Activated CD4-positive, alpha-beta T cell treated with anti-CD3 and anti-CD28 coated beads, Interleukin-2, amount 10 ng/mL, durations not matched to agents 24 days and 14 days (primary cell): ENCODE measurements at regions of chr1 and their contacts with region 1.

Region 1: GRCh38 chr1:89454845-89455521 is 69.6 kb upstream of the LRRC8B start:
- DNase-seq: peak; percentile 91
- H3K4me3 Mint-ChIP-seq: no peak overlapping the region
- H3K27ac Mint-ChIP-seq: no peak overlapping the region
- H3K4me1 Mint-ChIP-seq: peaks cover 23% of the 10 kb centered on the region
- H3K27me3 Mint-ChIP-seq: peaks cover 38% of the 10 kb centered on the region

Region 2: DNA sequence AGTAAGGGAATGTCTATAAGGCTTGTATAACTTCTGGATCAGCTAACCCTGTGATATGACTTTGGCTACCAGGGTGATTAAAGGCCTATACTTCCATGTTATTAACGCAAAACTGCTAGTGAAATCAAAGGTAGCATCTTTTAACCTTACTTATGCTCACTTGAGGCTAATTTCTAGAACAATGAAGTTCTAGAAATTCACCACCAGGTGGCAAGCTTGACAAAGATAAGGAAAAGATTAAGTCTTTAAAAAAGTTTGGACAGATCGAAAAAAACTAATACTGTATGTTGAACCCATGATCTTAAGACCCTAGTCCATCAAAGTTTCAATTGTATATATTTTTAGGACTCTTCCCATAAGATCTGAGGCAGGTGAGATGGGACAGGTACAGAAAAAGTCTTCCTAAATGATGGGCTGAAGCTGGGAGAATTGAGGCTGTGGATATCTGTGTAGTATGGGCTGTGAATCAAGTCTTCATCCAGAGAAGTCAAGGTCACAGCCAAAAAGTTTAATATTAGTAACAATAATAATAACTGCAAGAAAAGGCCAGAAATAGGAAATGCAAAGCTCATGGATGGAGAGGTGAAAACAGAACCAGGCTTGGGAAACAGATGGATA is 481.4 kb before region 1 on chr1:
- intact Hi-C with region 1: loop called (anchors 1 kb)
- DNase-seq: no peak
- H3K4me3 Mint-ChIP-seq: no peak overlapping the region
- H3K27ac Mint-ChIP-seq: peak overlapping the region; percentile 4
- H3K4me1 Mint-ChIP-seq: peaks cover 21% of the 10 kb centered on the region
- H3K27me3 Mint-ChIP-seq: no peaks in the 10 kb centered on the region

Region 3: DNA sequence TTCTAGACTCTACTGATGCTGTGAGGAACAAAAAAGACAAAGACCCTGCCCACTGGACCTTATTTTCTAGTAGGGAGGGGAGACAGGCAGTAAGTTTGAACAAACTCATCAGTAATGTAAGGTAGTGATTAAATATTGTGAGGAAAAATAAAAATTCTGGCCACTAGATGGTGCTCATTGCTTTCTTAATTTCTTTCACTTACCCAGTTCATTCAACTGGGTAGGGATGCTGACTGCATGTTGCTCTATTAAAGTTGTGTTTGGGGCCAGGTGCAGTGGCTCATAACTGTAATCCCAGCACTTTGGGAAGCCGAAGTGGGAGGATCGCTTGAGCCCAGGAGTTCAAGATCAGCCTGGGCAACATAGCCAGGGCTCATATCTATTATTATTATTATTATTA is 456.3 kb before region 1 on chr1:
- intact Hi-C with region 1: loop called (anchors 1 kb)
- DNase-seq: peak; percentile 85
- H3K4me3 Mint-ChIP-seq: no peak overlapping the region
- H3K27ac Mint-ChIP-seq: no peak overlapping the region
- H3K4me1 Mint-ChIP-seq: peaks cover 30% of the 10 kb centered on the region
- H3K27me3 Mint-ChIP-seq: no peaks in the 10 kb centered on the region

Region 4: DNA sequence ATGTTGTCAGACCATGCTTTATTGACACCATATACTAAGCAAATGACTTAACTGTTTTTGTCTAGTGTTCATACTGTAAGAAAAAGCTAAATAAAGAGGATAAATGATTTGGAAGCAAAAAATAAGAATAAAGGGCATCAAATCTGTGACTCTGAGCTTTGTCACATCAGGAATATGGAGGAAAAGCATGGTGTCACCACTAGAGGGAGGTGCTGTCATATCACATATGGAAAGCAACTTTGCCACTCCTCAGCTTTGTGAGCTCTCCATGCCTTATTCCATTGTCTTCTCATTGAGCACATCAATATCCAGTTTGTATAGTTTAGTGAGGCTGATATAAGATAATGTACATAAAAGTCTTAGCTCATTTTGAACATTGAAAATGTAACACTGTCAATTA is 369.2 kb before region 1 on chr1:
- intact Hi-C with region 1: loop called (anchors 1 kb)
- DNase-seq: peak; percentile 89
- H3K4me3 Mint-ChIP-seq: no peak overlapping the region
- H3K27ac Mint-ChIP-seq: no peak overlapping the region
- H3K4me1 Mint-ChIP-seq: peaks cover 12% of the 10 kb centered on the region
- H3K27me3 Mint-ChIP-seq: no peaks in the 10 kb centered on the region

Region 5: GRCh38 chr1:89198491-89199072 is 256.4 kb before region 1 on chr1 and contains the start of gene GBP4:
- intact Hi-C with region 1: loop called (anchors 1 kb)
- DNase-seq: peak; percentile 87
- H3K4me3 Mint-ChIP-seq: peak within 1 kb of the TSS; percentile 91
- H3K27ac Mint-ChIP-seq: peak within 1 kb of the TSS; percentile 96
- H3K4me1 Mint-ChIP-seq: peaks cover 67% of the 10 kb centered on the region
- H3K27me3 Mint-ChIP-seq: no peaks in the 10 kb centered on the region
- total RNA-seq, gene GBP4: 29.5 and 33.5 TPM in 2 replicates

Region 6: GRCh38 chr1:89358287-89358893 is 96.6 kb before region 1 on chr1:
- intact Hi-C with region 1: loop called (anchors 2 kb)
- DNase-seq: peak; percentile 95
- H3K4me3 Mint-ChIP-seq: peak overlapping the region; percentile 71
- H3K27ac Mint-ChIP-seq: peak overlapping the region; percentile 63
- H3K4me1 Mint-ChIP-seq: peaks cover 58% of the 10 kb centered on the region
- H3K27me3 Mint-ChIP-seq: peaks cover 7% of the 10 kb centered on the region

Region 7: DNA sequence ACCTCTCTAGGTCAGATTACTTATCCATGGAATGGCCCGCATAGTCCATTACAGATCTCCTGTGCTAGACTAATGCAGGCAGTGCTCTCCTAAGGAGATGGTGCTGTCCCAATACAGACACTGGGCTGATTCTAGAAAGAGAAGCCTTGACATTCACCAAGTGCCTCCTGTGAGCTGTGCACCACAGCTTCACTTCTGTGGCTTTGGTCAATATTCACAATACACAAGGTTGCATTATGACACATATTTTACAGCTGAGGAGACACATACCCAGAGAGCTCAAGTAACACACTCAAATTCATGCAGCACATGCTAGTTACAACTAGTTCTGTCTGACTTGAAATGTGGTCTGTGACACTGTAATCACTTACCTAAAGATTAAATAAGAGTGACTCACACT is 10.2 kb after region 1 on chr1:
- intact Hi-C with region 1: loop called (anchors 1 kb)
- DNase-seq: no peak
- H3K4me3 Mint-ChIP-seq: no peak overlapping the region
- H3K27ac Mint-ChIP-seq: peak overlapping the region; percentile 5
- H3K4me1 Mint-ChIP-seq: peaks cover 29% of the 10 kb centered on the region
- H3K27me3 Mint-ChIP-seq: peaks cover 59% of the 10 kb centered on the region